IMR-90 (cell line): ENCODE measurements at regions of chr1 and their contacts with region 1.

Region 1: GRCh38 chr1:9746211-9746610 is 77.6 kb downstream of the CLSTN1 start:
- DNase-seq: no peak
- ATAC-seq: no peak
- H3K4me3 ChIP-seq: no peak overlapping the region
- H3K27ac ChIP-seq: no peak overlapping the region
- H3K4me1 ChIP-seq: no peaks in the 10 kb centered on the region
- H3K27me3 ChIP-seq: no peaks in the 10 kb centered on the region
- CTCF ChIP-seq: no peak
- POLR2A ChIP-seq: no peak
- RAD21 ChIP-seq: no peak

Region 2: DNA sequence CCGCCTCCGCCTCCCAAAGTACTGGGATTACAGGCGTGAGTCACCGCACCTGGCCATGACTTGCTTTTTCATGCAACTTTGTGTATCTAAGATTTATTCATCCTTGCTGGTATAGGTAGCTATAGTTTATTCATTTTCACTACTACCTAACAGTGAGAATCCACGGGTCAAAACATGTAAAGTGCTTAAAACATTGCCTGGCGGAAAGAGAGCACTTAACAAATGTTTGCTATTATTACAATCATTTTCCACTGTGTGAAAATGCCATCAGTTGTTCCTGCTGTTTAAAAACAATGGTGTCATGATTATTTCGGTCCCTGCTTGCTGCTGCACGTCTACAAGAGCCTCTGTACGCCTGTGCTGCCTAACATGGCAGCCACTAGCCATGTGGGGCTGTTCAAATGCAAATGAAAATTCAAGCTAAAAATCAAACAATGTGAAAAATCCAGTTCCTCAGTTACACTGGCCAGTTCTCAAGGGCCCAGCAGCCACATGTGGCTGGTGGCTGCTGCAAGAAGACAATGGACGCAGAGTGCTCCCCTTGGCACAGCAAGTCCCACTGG is 12.4 kb after region 1 on chr1:
- CTCF ChIA-PET with region 1: no interaction called
- POLR2A ChIA-PET with region 1: no interaction called
- dilution Hi-C with region 1: no loop called
- in situ Hi-C with region 1: no loop called
- intact Hi-C with region 1: no loop called
- DNase-seq: no peak
- ATAC-seq: no peak
- H3K4me3 ChIP-seq: no peak overlapping the region
- H3K27ac ChIP-seq: no peak overlapping the region
- H3K4me1 ChIP-seq: peaks cover 4% of the 10 kb centered on the region
- H3K27me3 ChIP-seq: no peaks in the 10 kb centered on the region
- CTCF ChIP-seq: no peak
- POLR2A ChIP-seq: no peak
- RAD21 ChIP-seq: no peak

Region 3: DNA sequence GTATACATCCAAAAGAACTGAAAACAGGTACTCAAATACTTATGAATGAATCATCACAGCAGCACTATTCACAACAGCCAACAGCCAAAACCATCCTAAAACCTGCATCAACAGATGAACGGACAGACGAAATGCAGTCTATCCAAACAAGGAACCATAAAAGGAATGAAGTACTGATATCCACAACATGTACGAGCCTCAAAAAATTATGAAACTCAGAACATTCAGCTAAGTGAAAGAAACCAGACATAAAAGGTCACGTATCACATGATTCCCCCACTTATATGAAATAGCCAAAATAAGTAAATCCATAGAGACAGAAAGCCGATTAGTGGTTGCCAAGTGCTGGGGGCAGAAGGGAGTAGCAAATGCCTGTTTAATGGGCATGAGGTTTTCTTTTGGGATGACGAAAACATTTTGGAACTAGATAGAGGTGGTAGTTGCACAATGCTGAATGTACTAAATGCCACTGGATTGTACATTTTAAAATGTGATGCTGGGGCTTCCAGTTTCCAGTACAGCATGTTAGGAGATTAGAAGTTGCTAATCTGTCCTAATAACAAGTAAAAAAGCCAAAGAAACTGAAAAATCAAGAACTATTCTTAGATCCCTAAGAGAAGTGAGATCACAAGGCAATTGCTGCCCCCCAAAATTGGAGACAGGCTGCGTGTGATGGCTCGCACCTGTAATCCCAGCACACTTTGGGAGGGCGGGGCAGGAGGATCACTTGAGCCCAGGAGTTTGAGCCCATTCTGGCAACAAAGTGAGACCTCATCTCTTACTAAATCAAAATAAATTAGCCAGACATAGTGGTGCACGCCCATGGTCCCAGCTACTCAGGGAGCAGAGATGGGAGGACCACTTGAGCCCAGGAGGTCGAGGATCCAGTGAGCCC is 52.3 kb after region 1 on chr1:
- CTCF ChIA-PET with region 1: interaction called, 3 read pairs
- POLR2A ChIA-PET with region 1: no interaction called
- dilution Hi-C with region 1: no loop called
- in situ Hi-C with region 1: loop called (anchors 5 kb)
- intact Hi-C with region 1: no loop called
- DNase-seq: peak; percentile 18
- ATAC-seq: peak; percentile 27
- H3K4me3 ChIP-seq: no peak overlapping the region
- H3K27ac ChIP-seq: no peak overlapping the region; the same call in 1 of the 2 replicates
- H3K4me1 ChIP-seq: peaks cover 5% of the 10 kb centered on the region; the same call in 1 of the 2 replicates
- H3K27me3 ChIP-seq: no peaks in the 10 kb centered on the region
- CTCF ChIP-seq: no peak
- POLR2A ChIP-seq: no peak
- RAD21 ChIP-seq: no peak

Region 4: GRCh38 chr1:9823943-9824701 is 77.9 kb after region 1 on chr1 and contains the start of gene CLSTN1:
- CTCF ChIA-PET with region 1: no interaction called
- POLR2A ChIA-PET with region 1: no interaction called
- dilution Hi-C with region 1: no loop called
- in situ Hi-C with region 1: no loop called
- intact Hi-C with region 1: no loop called
- DNase-seq: peak; percentile 81
- ATAC-seq: peak; percentile 87
- H3K4me3 ChIP-seq: peak within 1 kb of the TSS; percentile 94
- H3K27ac ChIP-seq: peak within 1 kb of the TSS; percentile 39
- H3K4me1 ChIP-seq: 0 out of 2 replicates have a peak, but pooled peaks cover 2% of the 10 kb centered on the region
- H3K27me3 ChIP-seq: no peaks in the 10 kb centered on the region
- CTCF ChIP-seq: no peak
- POLR2A ChIP-seq: no peak
- RAD21 ChIP-seq: no peak
- total RNA-seq, gene CLSTN1: 30.1 and 31.9 TPM in 2 replicates